Naive thymus-derived CD4-positive, alpha-beta T cell (primary cell): ENCODE measurements at regions of chr6 and their contacts with region 1.

Region 1: DNA sequence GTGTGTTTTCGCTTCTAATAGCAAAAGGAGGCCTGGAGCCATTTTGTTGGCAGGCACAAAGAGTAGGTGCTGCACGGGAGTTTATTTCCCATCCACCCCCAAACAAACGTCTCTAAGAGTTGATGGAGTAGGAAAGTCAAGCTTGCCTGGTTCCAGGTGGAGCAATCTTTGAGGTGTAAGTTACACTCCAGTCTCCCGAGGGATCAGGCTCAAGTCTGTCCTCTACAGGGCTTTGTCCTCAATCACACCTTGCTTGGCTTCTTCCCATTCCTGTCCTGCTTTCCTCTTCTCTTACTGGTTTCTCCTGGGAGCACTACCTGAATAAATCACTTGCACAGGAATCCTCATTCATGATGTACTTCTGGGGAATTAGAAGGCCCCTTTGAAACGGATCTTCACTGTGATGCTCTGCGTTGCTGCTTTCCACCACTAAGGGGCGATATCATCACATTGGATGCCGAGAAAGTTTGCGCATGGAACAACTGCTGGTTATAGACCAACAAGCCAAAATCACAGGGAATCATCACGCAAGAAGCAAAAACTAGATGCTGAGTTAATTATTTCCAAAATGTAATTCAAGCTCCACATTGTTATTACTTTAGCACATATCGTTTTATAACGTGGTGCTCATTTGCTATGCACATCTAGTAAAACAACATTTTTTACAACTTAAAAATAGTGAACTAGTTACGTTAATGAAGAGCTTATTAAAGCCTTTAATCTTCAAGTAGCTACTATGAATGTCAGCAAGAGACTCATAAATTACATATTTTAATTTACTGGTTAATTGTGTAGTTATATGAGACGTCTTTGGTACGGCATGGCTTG is 156.8 kb downstream of the DNAH8 start:
- DNase-seq: peak; percentile 11 to 66 (median 38)
- ATAC-seq: peak; percentile 52
- H3K4me3 ChIP-seq: no peak overlapping the region
- H3K4me3 Mint-ChIP-seq: no peak overlapping the region
- H3K27ac ChIP-seq: no peak overlapping the region
- H3K27ac Mint-ChIP-seq: peak overlapping the region in 1 of 9 donors; percentile 4
- H3K4me1 ChIP-seq: peaks cover 9 to 23% of the 10 kb centered on the region in 2 donors
- H3K4me1 Mint-ChIP-seq: peaks cover 10 to 47% (median 24%) of the 10 kb centered on the region in 7 donors
- H3K27me3 ChIP-seq: no peaks in the 10 kb centered on the region
- H3K27me3 Mint-ChIP-seq: peaks cover 0 to 10% (median 7%) of the 10 kb centered on the region in 5 donors

Region 2: DNA sequence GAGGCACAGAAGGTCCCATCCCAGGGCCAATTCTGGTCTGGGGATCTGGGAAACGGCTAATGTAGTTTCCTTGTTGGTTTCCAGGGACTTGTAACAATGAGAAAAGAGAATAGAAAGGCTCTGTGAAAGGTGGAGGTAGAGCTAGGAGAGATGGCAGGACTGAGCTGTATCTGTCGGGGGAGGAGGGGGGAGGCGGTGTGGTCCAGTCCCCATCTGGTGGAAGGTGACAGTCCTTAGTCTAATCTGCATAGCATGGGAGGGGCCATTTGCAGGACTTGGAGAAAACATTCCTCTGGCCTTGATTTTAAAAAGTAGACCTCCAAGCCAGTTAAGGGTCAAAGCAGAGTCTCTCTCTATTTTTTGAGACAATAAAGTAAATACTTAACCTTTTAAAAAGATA is 19.7 kb before region 1 on chr6:
- CTCF ChIA-PET with region 1: no interaction called
- POLR2A ChIA-PET with region 1: no interaction called
- intact Hi-C with region 1: no loop called
- DNase-seq: no peak
- ATAC-seq: no peak
- H3K4me3 ChIP-seq: no peak overlapping the region
- H3K4me3 Mint-ChIP-seq: no peak overlapping the region
- H3K27ac ChIP-seq: no peak overlapping the region
- H3K27ac Mint-ChIP-seq: no peak overlapping the region
- H3K4me1 ChIP-seq: no peaks in the 10 kb centered on the region
- H3K4me1 Mint-ChIP-seq: no peaks in the 10 kb centered on the region
- H3K27me3 ChIP-seq: no peaks in the 10 kb centered on the region
- H3K27me3 Mint-ChIP-seq: peaks cover 11 to 34% (median 15%) of the 10 kb centered on the region in 5 donors

Region 3: DNA sequence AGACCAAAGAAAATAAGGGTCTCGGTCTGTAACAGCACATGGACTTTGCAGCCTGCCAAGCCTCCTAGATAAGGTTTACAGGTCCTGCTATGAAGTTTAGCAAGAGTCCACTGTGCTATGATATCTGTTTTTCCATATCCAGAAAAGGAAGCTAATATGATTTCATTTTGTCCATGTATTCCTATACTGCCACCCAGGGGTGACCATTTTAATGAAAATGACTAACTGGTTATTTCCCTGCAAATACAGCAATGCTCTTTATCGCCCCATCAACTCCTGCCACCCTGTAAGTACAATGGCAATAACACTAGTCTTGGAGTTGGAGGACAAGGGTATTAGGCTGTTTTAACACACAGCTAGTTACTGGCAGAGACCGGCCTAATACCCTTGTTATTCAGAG is 61.5 kb after region 1 on chr6:
- CTCF ChIA-PET with region 1: interaction called, 9 read pairs
- POLR2A ChIA-PET with region 1: no interaction called
- intact Hi-C with region 1: loop called (anchors 1 to 5 kb)
- DNase-seq: no peak
- ATAC-seq: no peak
- H3K4me3 ChIP-seq: no peak overlapping the region
- H3K4me3 Mint-ChIP-seq: no peak overlapping the region
- H3K27ac ChIP-seq: no peak overlapping the region
- H3K27ac Mint-ChIP-seq: no peak overlapping the region
- H3K4me1 ChIP-seq: no peaks in the 10 kb centered on the region
- H3K4me1 Mint-ChIP-seq: no peaks in the 10 kb centered on the region
- H3K27me3 ChIP-seq: no peaks in the 10 kb centered on the region
- H3K27me3 Mint-ChIP-seq: peaks cover 5 to 16% (median 13%) of the 10 kb centered on the region in 5 donors

Region 4: GRCh38 chr6:38997128-38997761 is 125.3 kb after region 1 on chr6:
- CTCF ChIA-PET with region 1: no interaction called
- POLR2A ChIA-PET with region 1: no interaction called
- intact Hi-C with region 1: loop called in 1 of 2 experiments (anchors 1 kb)
- DNase-seq: peak in 5 of 9 donors; percentile 3 to 27 (median 18)
- ATAC-seq: no peak
- H3K4me3 ChIP-seq: no peak overlapping the region
- H3K4me3 Mint-ChIP-seq: no peak overlapping the region
- H3K27ac ChIP-seq: no peak overlapping the region
- H3K27ac Mint-ChIP-seq: peak overlapping the region in 1 of 9 donors; percentile 62
- H3K4me1 ChIP-seq: no peaks in the 10 kb centered on the region
- H3K4me1 Mint-ChIP-seq: no peaks in the 10 kb centered on the region
- H3K27me3 ChIP-seq: no peaks in the 10 kb centered on the region
- H3K27me3 Mint-ChIP-seq: peaks cover 42 to 60% (median 47%) of the 10 kb centered on the region in 5 donors

Region 5: GRCh38 chr6:39166189-39166911 is 294.4 kb after region 1 on chr6:
- CTCF ChIA-PET with region 1: interaction called, 3 read pairs
- POLR2A ChIA-PET with region 1: no interaction called
- intact Hi-C with region 1: loop called (anchors 1 kb)
- DNase-seq: peak; percentile 26 to 86 (median 66)
- ATAC-seq: peak; percentile 86
- H3K4me3 ChIP-seq: no peak overlapping the region
- H3K4me3 Mint-ChIP-seq: peak overlapping the region in 2 of 10 donors; percentile 34 to 44
- H3K27ac ChIP-seq: no peak overlapping the region
- H3K27ac Mint-ChIP-seq: no peak overlapping the region
- H3K4me1 ChIP-seq: peaks cover 0 to 3% of the 10 kb centered on the region in 2 donors
- H3K4me1 Mint-ChIP-seq: peaks cover 0 to 8% (median 5%) of the 10 kb centered on the region in 7 donors
- H3K27me3 ChIP-seq: no peaks in the 10 kb centered on the region
- H3K27me3 Mint-ChIP-seq: peaks cover 0 to 7% (median 4%) of the 10 kb centered on the region in 5 donors

Region 6: DNA sequence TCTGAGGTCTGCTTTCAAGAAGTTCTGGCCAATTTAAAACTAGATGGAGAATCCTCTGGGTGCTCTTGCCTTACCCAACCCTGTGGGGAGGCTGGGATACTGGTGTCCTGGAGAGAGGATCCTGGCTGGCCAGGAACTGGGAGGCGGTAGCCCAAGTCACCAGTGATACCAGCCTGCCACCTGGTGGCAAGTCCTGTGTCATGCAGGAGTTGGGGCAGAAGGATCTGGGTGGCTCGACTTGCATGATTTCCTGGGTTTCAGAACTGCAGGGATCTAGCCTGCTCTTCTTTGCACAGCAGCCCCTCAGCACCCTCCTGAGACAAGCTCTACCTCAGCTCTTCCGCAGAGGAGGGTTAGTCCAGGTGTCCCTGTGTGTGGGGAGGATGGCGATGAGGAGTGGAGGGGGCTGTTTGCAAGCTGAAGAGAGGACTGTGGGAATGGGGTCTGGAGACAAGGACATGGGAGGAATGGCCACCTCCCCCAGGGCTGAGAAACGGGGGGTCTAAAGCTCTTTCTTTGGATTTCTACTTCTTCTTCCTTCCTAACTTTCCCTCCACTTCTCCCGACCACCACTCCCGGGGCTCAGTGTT is 438.1 kb after region 1 on chr6:
- CTCF ChIA-PET with region 1: interaction called, 9 read pairs
- POLR2A ChIA-PET with region 1: no interaction called
- intact Hi-C with region 1: loop called (anchors 1 kb)
- DNase-seq: peak in 8 of 9 donors; percentile 23 to 70 (median 31)
- ATAC-seq: peak; percentile 69
- H3K4me3 ChIP-seq: no peak overlapping the region
- H3K4me3 Mint-ChIP-seq: no peak overlapping the region
- H3K27ac ChIP-seq: no peak overlapping the region
- H3K27ac Mint-ChIP-seq: no peak overlapping the region
- H3K4me1 ChIP-seq: no peaks in the 10 kb centered on the region
- H3K4me1 Mint-ChIP-seq: peaks cover 0 to 7% (median 0%) of the 10 kb centered on the region in 7 donors
- H3K27me3 ChIP-seq: no peaks in the 10 kb centered on the region
- H3K27me3 Mint-ChIP-seq: peaks cover 21 to 43% (median 23%) of the 10 kb centered on the region in 5 donors